Stomach (tissue), 19 donors: ENCODE measurements at regions of chr17 and their contacts with region 1.

Region 1: DNA sequence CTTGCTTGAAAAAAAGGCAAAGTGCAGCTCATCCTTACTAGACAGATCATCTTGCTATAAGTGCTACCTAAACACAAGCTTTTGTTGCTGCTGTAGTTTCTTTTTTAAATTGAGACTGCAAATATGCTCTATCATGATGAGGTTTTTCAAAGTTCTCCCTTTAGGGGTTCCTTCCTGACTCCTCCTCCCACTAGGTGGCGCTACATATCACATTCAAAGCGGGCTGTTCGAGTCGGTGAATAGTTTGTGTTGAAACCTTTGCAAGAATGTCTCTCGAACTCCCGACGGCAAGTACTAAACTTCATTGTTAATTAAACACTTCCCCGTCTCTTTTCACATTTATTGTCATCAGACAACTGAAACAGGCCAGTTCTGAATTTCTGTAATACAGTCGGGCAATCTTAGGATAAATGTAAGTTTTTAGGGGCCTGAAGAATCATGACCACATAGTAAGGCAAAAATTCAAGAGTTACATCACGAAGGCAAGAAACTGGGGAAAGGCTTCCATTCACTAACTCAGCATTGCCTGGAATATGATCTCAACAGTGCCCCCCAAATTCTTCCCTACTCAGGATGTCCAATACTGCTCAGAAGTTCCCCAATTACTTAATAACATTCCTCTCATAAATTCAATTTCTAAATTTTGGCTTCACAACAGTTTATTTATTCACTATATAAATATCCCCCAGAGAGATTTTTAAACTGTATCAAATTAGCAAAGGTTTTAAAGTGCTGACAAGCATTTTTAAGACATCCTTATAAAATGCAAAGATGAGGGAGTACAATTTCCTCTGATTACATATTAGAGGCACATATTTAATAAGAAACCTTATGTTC is 6.7 kb downstream of the HS3ST3A1 start:
- DNase-seq: peak; percentile 74 to 92
- H3K4me3 ChIP-seq: no peak overlapping the region
- H3K27ac ChIP-seq: no peak overlapping the region
- H3K4me1 ChIP-seq: peaks cover 0 to 7% (median 0%) of the 10 kb centered on the region in 4 donors
- H3K27me3 ChIP-seq: peaks cover 0 to 36% (median 8%) of the 10 kb centered on the region in 3 donors
- CTCF ChIP-seq: peak in 5 of 7 experiments; percentile 55 to 88 (median 82)
- EP300 ChIP-seq: no peak
- POLR2A ChIP-seq: no peak

Region 2: GRCh38 chr17:14300575-14301278 is 705.7 kb after region 1 on chr17 and contains the start of gene HS3ST3B1:
- intact Hi-C with region 1: loop called (anchors 5 kb)
- DNase-seq: peak; percentile 97 to 99
- H3K4me3 ChIP-seq: peak within 1 kb of the TSS; percentile 55 to 78 (median 68)
- H3K27ac ChIP-seq: peak within 1 kb of the TSS; percentile 78 to 87 (median 82)
- H3K4me1 ChIP-seq: peaks cover 54 to 83% (median 68%) of the 10 kb centered on the region in 4 donors
- H3K27me3 ChIP-seq: peaks cover 19 to 100% (median 81%) of the 10 kb centered on the region in 3 donors
- CTCF ChIP-seq: peak in 2 of 7 experiments; percentile 12 to 20
- EP300 ChIP-seq: no peak
- POLR2A ChIP-seq: no peak
- total RNA-seq, gene HS3ST3B1: 1.7 to 3.6 (median 2.6) TPM in 3 of 5 donors, not detected in the others

Region 3: DNA sequence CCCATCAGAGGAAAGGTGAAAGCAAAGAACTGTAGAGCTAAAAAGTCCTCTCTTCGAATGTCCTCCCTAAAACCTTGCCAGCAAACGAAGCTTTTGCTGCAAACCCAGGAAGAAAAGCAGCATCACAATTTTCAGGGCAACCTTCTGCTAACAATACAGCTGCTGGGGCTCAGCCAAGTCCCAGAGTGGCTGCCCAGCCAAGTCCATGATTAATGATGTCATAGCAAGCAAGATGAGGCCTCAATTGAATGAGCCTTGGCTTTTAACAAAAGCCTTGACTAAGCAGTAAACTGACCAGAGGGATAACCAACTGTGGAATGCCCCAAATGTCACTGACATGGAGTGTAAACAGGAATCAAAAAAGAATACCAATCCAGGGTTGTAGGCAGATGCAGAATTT is 1327.4 kb after region 1 on chr17:
- intact Hi-C with region 1: loop called (anchors 5 kb)
- DNase-seq: peak in 1 of 2 donors; percentile 29
- H3K4me3 ChIP-seq: no peak overlapping the region
- H3K27ac ChIP-seq: no peak overlapping the region
- H3K4me1 ChIP-seq: peaks cover 0 to 7% (median 0%) of the 10 kb centered on the region in 4 donors
- H3K27me3 ChIP-seq: peaks cover 0 to 7% (median 0%) of the 10 kb centered on the region in 3 donors
- CTCF ChIP-seq: no peak
- EP300 ChIP-seq: no peak
- POLR2A ChIP-seq: no peak